ENCODE measurements at regions of chr7 and their contacts with region 1.

Region 1: DNA sequence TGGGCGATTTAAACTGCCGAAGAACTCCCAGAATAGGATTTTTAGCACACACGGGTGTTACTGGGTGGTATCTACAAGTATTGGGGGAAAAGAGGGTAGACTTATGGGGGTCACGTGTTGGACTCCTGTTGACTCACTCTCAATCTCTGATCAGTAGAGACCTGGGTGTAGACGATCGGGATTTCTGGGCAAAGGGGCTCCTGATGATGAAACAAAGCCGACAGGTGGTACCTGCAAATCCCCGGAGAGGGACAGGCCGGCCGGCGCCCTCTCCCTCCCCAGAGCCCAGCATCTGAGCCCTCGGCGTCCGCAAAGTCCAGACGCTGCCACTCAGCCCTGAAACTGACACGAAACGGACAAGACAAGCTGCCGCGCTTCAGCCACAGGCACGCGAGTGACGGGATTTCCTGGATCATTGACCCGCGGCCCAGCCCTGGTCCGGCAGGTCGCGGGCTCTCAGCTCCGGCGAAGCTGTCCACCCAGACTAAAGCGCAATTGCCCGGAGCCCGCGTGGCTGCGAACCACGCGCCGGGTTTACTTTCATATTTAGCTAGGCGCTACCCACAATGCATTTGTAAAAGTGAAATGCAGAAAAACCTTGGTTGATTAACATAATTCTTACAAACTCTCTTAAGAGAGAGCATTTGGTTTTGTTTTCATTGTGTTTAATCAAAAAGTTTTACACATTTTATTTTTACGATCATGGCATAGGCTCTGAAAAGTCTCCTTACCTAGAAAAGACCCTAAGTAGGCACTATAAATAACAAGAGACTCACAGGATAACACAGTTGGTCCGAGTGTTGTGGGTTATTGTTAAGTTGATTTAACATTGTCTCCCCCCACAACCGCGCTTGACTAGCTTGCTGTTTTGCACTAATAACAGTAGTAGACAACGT is 56.9 kb upstream of the EZH2 start:
- DNase-seq: peak; percentile 65
- H3K4me3 Mint-ChIP-seq: peak overlapping the region; percentile 96
- H3K27ac Mint-ChIP-seq: peak overlapping the region; percentile 98
- H3K4me1 Mint-ChIP-seq: peaks cover 31% of the 10 kb centered on the region
- H3K27me3 Mint-ChIP-seq: no peaks in the 10 kb centered on the region

Region 2: GRCh38 chr7:148838905-148839304 is 102.0 kb before region 1 on chr7:
- intact Hi-C with region 1: loop called (anchors 5 kb)
- DNase-seq: no peak
- H3K4me3 Mint-ChIP-seq: no peak overlapping the region
- H3K27ac Mint-ChIP-seq: no peak overlapping the region
- H3K4me1 Mint-ChIP-seq: peaks cover 59% of the 10 kb centered on the region
- H3K27me3 Mint-ChIP-seq: no peaks in the 10 kb centered on the region

Region 3: DNA sequence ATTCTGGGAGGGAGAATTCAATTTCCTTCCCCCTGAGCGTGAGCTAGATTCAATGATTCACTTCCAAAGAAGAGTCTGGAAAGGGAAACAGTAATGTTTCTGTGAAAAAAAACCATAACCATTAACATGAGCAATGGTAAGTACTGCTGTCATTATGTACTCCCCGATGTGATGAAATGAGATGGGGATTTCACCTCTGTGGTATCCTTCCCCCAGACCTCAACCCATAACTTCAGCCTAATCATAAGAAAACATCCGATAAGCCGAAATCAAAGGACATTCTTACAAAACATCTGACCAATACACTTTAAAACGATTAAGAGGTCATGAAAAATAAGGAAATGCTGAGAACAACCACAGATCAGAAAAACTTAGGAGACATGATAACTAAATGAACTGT is 84.1 kb before region 1 on chr7:
- intact Hi-C with region 1: loop called (anchors 1 kb)
- DNase-seq: no peak
- H3K4me3 Mint-ChIP-seq: peak overlapping the region; percentile 40
- H3K27ac Mint-ChIP-seq: peak overlapping the region; percentile 85
- H3K4me1 Mint-ChIP-seq: peaks cover 46% of the 10 kb centered on the region
- H3K27me3 Mint-ChIP-seq: no peaks in the 10 kb centered on the region

Region 4: DNA sequence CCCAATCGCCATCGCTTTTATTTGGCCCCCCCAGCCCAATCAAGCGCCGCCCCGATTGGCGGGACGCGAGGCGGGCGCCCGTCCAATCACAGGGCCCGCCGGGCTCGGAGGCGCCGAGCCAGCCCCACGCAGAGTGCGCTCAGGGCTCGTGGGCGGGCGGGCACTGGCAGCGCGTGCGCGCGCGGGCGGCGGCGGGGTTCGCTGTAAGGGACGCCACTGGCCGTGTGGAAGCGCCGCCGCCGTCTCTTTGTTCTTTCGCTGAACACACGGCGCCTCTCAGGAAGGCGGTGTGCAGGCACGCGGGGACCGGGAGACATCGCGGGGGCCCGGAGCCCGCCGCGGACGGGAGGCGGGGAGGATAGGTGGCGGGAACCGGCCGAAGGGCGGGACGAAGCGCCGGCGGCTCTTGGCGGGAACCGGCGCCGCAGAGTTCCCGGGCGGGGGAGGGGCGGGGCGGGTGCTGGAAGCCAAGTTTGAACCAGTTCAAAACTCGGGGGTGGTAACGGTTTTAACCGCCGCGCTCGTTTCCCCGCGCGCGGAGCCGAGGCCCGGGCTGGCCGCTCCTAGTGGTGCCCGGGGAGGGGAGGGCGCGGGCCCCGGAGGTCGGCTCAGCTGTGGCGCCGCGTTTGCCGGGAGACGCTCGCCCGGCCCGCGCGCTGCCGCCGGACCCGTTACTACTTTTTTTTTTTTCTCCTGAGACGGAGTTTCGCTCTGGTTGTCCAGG is 56.5 kb before region 1 on chr7:
- intact Hi-C with region 1: loop called (anchors 1 kb)
- DNase-seq: peak; percentile 95
- H3K4me3 Mint-ChIP-seq: peak overlapping the region; percentile 93
- H3K27ac Mint-ChIP-seq: peak overlapping the region; percentile 98
- H3K4me1 Mint-ChIP-seq: peaks cover 43% of the 10 kb centered on the region
- H3K27me3 Mint-ChIP-seq: no peaks in the 10 kb centered on the region

Region 5: GRCh38 chr7:148914208-148914777 is 26.7 kb before region 1 on chr7:
- intact Hi-C with region 1: loop called (anchors 1 kb)
- DNase-seq: peak; percentile 34
- H3K4me3 Mint-ChIP-seq: peak overlapping the region; percentile 77
- H3K27ac Mint-ChIP-seq: peak overlapping the region; percentile 94
- H3K4me1 Mint-ChIP-seq: peaks cover 63% of the 10 kb centered on the region
- H3K27me3 Mint-ChIP-seq: peaks cover 2% of the 10 kb centered on the region

Region 6: DNA sequence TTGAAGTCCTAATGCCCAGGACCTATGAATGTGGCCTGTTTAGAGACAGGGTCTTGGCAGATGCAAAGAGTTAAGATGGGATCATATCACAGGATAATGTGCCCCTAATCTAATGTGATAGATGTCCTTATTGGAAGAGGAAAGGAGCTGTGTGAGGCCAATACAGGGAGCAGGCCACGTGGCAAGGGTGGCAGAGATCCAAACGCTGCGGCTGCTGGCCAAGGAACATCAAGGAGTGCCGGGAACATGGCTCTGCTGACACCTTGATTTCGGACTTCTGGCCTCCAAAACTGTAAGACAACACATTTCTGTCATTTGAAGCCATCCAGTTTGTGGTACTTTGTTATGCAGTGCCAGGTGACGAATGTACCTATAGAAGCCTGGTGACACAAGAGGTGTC is 19.1 kb before region 1 on chr7:
- intact Hi-C with region 1: loop called (anchors 1 kb)
- DNase-seq: no peak
- H3K4me3 Mint-ChIP-seq: no peak overlapping the region
- H3K27ac Mint-ChIP-seq: no peak overlapping the region
- H3K4me1 Mint-ChIP-seq: peaks cover 30% of the 10 kb centered on the region
- H3K27me3 Mint-ChIP-seq: peaks cover 2% of the 10 kb centered on the region

Region 7: DNA sequence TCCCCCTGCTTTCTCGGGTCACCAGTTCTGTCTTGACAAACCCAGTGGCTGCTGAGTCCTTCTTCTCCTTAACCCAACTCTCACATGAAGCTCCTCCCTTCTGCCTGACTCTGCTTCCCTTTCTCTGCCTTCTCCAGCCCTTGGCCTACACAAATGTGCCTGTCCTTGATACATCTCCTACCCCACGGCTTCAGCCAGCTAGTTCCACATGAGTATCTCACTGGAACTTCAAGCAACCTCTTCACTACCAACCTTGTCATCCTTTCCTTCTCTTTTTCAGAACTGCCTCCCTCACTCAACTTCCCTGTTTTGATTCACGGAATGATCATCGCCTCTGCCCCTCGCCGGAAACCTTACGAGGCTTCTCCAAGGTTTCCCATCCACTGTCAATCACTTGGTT is 31.4 kb after region 1 on chr7:
- intact Hi-C with region 1: no loop called
- DNase-seq: no peak
- H3K4me3 Mint-ChIP-seq: no peak overlapping the region
- H3K27ac Mint-ChIP-seq: no peak overlapping the region
- H3K4me1 Mint-ChIP-seq: no peaks in the 10 kb centered on the region
- H3K27me3 Mint-ChIP-seq: peaks cover 3% of the 10 kb centered on the region

Region 8: DNA sequence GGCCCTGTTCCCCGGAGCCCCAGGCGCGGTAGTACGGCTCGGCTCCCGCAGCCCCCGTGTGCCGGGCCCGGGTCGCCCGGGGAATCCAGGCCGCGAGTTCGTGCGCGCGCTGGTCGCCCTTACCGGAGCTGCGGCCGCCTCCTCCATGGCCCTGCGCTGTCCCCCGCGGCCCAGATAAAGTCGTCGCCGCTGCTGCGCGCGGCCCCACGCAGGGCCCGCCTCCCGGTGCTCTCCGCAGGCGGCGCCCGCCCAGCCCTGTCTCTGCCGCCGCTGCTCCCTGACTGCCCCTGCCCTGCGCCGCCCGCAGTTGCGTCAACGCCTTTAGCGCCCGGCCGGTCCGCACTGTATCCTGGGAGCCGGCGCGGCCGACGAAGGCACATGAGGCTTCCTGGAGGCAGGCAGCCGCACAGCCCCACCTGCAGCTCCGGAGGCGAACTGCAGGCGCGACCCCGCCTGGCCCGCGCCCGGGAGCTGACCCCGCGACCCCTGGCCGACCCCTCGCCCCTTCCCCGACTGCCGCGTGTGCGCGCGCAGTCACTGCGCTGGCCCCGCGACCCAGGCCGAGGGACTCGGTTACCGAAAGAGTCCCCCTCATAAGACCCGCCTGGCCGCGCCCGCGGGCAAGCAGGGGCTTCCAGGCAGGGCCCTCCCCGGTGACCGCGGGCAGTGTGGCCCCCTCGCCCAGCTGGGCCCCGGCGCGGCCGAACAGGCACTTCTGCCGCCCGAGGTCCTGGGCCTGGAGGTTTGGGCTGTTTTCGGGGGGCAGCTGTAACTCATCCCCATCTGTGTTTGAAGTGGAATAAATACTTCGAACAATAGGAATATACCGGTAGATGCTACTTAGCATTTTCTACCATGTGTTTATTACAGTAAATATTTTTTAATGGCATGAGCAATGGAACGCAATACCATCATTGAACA is 683.7 kb after region 1 on chr7:
- intact Hi-C with region 1: no loop called
- DNase-seq: peak; percentile 91
- H3K4me3 Mint-ChIP-seq: peak overlapping the region; percentile 89
- H3K27ac Mint-ChIP-seq: peak overlapping the region; percentile 83
- H3K4me1 Mint-ChIP-seq: peaks cover 32% of the 10 kb centered on the region
- H3K27me3 Mint-ChIP-seq: peaks cover 6% of the 10 kb centered on the region

Measured in activated T-helper 1 cell treated with anti-CD3 and anti-CD28 coated beads, Interleukin-12 subunit alpha, Interleukin-12 subunit beta, Interleukin-2, Interleukin-4 antibody, amounts not matched to agents 30 ng/mL and 10 ng/mL and 1 ng/mL, durations not matched to agents 14 hours and 24 hours and 36 hours (primary cell).